Activated T-helper 1 cell treated with anti-CD3 and anti-CD28 coated beads, Interleukin-12 subunit alpha, Interleukin-12 subunit beta, Interleukin-2, Interleukin-4 antibody, amounts not matched to agents 30 ng/mL and 10 ng/mL and 1 ng/mL, durations not matched to agents 14 hours and 24 hours and 36 hours (primary cell): ENCODE measurements at regions of chrX and their contacts with region 1.

Region 1: GRCh38 chrX:119235872-119236622 is at the start of gene PGRMC1:
- DNase-seq: peak; percentile 73
- H3K4me3 Mint-ChIP-seq: peak within 1 kb of the TSS; percentile 92
- H3K27ac Mint-ChIP-seq: peak within 1 kb of the TSS; percentile 74
- H3K4me1 Mint-ChIP-seq: peaks cover 28% of the 10 kb centered on the region
- H3K27me3 Mint-ChIP-seq: peaks cover 17% of the 10 kb centered on the region
- total RNA-seq, gene PGRMC1: 41.1 and 41.6 TPM in 2 replicates

Region 2: DNA sequence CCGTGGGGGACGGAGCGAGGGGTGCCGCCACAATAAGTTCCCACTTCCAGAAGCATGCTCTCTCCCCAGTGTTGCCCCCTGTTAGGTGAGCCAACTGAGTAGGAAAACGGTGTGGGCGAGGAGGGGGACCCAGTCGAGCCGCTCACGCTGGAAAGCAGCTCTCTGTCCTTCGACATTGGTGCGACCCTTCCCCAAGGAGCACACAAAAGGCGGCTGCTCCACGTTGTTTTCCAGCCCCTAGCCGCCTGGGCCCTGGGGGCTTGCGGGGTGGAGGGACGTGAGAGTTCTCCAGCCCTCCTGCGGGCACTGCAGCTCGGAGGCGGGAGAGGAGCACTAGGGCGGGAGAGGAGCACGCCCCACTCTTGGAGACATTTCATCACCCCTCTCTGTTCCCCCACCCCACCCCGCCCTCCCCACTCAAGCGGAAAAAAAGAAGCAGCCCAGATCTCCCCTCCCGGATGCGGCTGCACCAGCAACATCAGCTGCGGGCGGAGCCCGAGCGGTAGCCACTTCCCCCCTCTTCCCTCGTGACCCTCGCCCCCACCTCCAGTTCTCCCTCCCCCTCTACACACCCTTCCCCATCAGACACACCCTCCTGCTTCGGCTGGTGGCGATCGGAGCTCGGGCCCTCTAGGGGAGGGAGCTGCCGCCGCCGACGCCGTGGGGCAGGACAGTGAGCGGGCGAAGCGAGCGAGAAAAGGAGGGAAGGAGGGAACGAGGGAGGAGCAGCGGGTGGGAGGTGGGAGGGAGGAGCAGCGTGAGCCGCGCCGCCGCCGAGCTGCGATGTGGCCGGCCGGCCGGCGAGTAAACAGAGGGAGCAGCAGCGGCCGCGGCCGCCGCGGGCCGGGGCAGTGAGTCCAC is 740.8 kb before region 1 on chrX and contains the start of gene DOCK11:
- intact Hi-C with region 1: loop called (anchors 5 kb)
- DNase-seq: peak; percentile 75
- H3K4me3 Mint-ChIP-seq: peak within 1 kb of the TSS; percentile 98
- H3K27ac Mint-ChIP-seq: peak within 1 kb of the TSS; percentile 97
- H3K4me1 Mint-ChIP-seq: peaks cover 30% of the 10 kb centered on the region
- H3K27me3 Mint-ChIP-seq: no peaks in the 10 kb centered on the region
- total RNA-seq, gene DOCK11: 28.6 and 30.1 TPM in 2 replicates

Region 3: DNA sequence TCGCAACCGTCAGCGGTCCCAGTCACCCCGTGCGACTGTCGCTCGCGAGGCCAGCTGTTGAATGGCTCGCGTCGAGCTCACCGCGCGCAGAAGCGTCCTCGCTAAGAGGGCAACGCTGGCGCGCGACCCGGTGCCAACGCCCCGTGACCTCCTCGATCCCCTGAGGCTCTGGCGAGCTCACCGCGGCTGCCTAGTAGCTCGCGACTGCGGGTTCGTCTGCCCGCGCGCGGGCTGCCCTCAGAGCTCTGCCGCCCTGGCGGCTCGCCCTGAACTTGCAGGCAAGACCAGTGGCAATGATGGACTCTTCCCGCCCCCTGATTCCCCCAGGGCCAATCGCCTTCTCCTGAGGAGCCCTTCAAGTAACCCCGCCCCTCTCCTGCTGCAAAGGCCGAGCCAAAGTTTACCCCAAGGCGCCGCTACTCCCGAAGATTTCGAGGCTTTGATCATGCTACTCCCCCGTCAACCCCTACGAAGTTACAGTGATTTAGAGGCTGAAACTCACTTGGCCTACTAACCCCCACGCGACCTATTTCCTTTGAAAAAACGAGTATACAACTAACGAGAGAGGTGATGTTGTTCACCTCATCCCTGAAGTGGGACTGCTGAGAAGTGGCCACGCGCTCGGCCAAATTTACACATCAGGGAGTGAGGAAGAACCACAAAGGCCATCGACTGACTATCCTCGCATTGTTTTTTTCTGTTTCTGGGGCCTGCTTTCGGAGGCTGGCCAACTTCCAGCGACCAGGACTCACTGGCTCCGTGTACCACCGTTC is 37.6 kb after region 1 on chrX:
- intact Hi-C with region 1: loop called (anchors 1 kb)
- DNase-seq: peak; percentile 36
- H3K4me3 Mint-ChIP-seq: peak overlapping the region; percentile 59
- H3K27ac Mint-ChIP-seq: no peak overlapping the region
- H3K4me1 Mint-ChIP-seq: peaks cover 8% of the 10 kb centered on the region
- H3K27me3 Mint-ChIP-seq: peaks cover 16% of the 10 kb centered on the region

Region 4: DNA sequence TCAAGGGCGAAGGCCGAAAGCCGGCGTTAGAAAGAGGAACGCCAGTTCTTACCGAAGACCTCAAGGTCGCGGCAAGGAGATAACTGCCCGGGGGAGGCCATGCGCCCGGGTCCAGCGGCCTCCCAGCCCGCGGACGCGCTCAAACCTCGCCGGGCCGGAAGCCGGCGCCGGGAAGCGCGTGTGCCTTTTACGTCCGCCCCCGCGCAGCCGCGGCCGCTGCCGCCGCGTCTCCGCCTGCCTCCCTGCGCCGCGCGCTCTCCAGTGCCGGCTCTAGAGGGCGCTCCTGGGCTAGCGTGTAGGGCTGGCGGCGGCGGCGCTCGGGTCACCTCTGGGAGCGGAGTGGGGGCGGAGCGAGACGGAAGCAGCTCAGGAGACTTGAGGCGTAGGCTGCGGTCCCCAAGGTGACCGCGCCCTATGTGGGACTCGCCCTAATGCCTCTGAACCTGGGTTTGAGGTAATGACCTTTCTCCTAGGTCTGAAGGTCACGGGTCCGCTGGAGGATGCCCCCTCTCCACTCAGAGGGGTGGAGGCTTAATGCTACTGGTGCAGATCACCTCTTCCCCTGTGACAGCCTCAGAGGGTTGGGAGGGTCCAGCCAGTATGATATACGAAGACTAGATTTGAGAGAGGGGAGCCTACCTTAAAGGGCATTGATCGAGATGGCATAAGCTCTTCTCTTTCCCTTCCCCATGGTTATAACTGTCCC is 233.0 kb after region 1 on chrX:
- intact Hi-C with region 1: loop called (anchors 1 kb)
- DNase-seq: peak; percentile 83
- H3K4me3 Mint-ChIP-seq: peak overlapping the region; percentile 90
- H3K27ac Mint-ChIP-seq: peak overlapping the region; percentile 93
- H3K4me1 Mint-ChIP-seq: peaks cover 12% of the 10 kb centered on the region
- H3K27me3 Mint-ChIP-seq: no peaks in the 10 kb centered on the region

Region 5: GRCh38 chrX:119943185-119943988 is 707.3 kb after region 1 on chrX and contains the start of gene NKAP:
- intact Hi-C with region 1: loop called (anchors 10 kb)
- DNase-seq: peak; percentile 78
- H3K4me3 Mint-ChIP-seq: peak within 1 kb of the TSS; percentile 93
- H3K27ac Mint-ChIP-seq: peak within 1 kb of the TSS; percentile 97
- H3K4me1 Mint-ChIP-seq: peaks cover 16% of the 10 kb centered on the region
- H3K27me3 Mint-ChIP-seq: peaks cover 2% of the 10 kb centered on the region
- total RNA-seq, gene NKAP: 9.4 and 10.1 TPM in 2 replicates